Activated CD8-positive, alpha-beta T cell treated with anti-CD3 and anti-CD28 coated beads for 36 hours (primary cell): ENCODE measurements at regions of chr1 and their contacts with region 1.

Region 1: GRCh38 chr1:145720877-145721671 is 1.8 kb downstream of the CD160 start:
- DNase-seq: peak; percentile 78
- ATAC-seq: peak; percentile 79
- H3K4me3 Mint-ChIP-seq: peak overlapping the region; percentile 72
- H3K27ac Mint-ChIP-seq: peak overlapping the region; percentile 78
- H3K4me1 Mint-ChIP-seq: peaks cover 38% of the 10 kb centered on the region
- H3K27me3 Mint-ChIP-seq: peaks cover 12% of the 10 kb centered on the region
- CTCF ChIP-seq: peak; percentile 94

Region 2: GRCh38 chr1:145601593-145601992 is 119.5 kb before region 1 on chr1:
- CTCF ChIA-PET with region 1: interaction called, 10 read pairs
- POLR2A ChIA-PET with region 1: no interaction called
- intact Hi-C with region 1: no loop called
- DNase-seq: no peak
- ATAC-seq: no peak
- H3K4me3 Mint-ChIP-seq: no peak overlapping the region
- H3K27ac Mint-ChIP-seq: no peak overlapping the region
- H3K4me1 Mint-ChIP-seq: no peaks in the 10 kb centered on the region
- H3K27me3 Mint-ChIP-seq: peaks cover 8% of the 10 kb centered on the region
- CTCF ChIP-seq: no peak

Region 3: DNA sequence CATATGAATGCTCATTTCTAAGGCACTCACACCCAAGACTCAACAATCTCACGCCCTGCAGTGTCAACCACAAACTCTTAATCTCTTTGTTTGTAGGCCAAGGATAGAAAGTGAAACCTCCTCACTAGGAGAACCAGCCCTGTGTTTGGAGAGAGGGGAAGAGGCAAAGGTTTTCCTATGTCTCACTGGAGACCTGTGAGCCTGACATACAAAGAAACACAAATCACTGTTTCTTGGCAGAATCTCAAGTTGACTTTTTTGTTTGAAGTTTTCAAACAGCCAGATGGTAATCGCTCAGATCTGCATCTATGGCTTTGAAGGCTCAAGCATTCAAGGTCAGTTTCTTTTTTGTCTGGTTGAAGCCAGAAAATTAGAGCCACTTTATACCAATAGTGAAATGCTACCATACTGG is 30.4 kb before region 1 on chr1:
- CTCF ChIA-PET with region 1: interaction called, 13 read pairs
- POLR2A ChIA-PET with region 1: no interaction called
- intact Hi-C with region 1: no loop called
- DNase-seq: peak; percentile 66
- ATAC-seq: peak; percentile 95
- H3K4me3 Mint-ChIP-seq: no peak overlapping the region
- H3K27ac Mint-ChIP-seq: peak overlapping the region; percentile 68
- H3K4me1 Mint-ChIP-seq: peaks cover 27% of the 10 kb centered on the region
- H3K27me3 Mint-ChIP-seq: no peaks in the 10 kb centered on the region
- CTCF ChIP-seq: no peak

Region 4: GRCh38 chr1:145706086-145706680 is 14.9 kb before region 1 on chr1:
- CTCF ChIA-PET with region 1: interaction called, 15 read pairs
- POLR2A ChIA-PET with region 1: interaction called, 3 read pairs
- intact Hi-C with region 1: no loop called
- DNase-seq: no peak
- ATAC-seq: no peak
- H3K4me3 Mint-ChIP-seq: no peak overlapping the region
- H3K27ac Mint-ChIP-seq: no peak overlapping the region
- H3K4me1 Mint-ChIP-seq: no peaks in the 10 kb centered on the region
- H3K27me3 Mint-ChIP-seq: no peaks in the 10 kb centered on the region
- CTCF ChIP-seq: no peak

Region 5: DNA sequence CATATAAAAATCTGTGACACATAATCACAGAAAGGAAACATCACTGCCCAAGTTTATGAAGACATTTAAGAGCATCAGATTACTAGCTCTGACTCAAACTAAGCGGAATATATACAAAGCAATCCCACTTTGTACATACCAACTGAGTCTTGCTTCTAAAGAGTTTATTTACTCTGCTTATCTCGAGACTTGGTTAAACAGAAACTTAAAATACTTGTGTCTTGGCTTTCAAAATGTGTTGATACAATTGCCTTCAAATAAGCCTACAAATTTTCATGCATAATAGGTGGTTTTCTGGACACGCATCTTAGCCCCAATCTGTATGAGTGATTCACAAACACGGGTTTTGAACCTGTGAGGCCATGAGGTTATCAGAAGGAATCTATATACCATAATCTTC is 19.2 kb after region 1 on chr1:
- CTCF ChIA-PET with region 1: interaction called, 24 read pairs
- POLR2A ChIA-PET with region 1: interaction called, 3 read pairs
- intact Hi-C with region 1: no loop called
- DNase-seq: no peak
- ATAC-seq: no peak
- H3K4me3 Mint-ChIP-seq: no peak overlapping the region
- H3K27ac Mint-ChIP-seq: no peak overlapping the region
- H3K4me1 Mint-ChIP-seq: peaks cover 2% of the 10 kb centered on the region
- H3K27me3 Mint-ChIP-seq: no peaks in the 10 kb centered on the region
- CTCF ChIP-seq: no peak

Region 6: DNA sequence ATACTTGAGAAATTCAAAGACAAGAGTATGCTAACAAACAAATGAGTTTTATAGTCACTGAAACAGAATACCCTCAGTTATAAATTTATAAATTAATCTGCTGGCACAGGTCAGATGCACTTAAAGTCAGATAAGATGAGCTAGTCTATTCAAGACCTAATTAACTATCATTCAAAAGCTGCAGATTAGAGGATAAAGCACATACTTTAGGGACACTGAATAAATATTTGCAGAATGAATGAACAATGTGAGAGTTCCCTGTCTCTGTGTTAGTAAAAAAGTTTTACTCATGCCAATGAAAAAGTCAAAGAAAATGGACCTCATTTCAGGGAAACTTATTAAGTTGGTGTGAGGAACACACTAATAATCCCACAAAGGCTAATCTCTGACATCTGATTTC is 44.5 kb after region 1 on chr1:
- CTCF ChIA-PET with region 1: no interaction called
- POLR2A ChIA-PET with region 1: no interaction called
- intact Hi-C with region 1: no loop called
- DNase-seq: no peak
- ATAC-seq: no peak
- H3K4me3 Mint-ChIP-seq: no peak overlapping the region
- H3K27ac Mint-ChIP-seq: no peak overlapping the region
- H3K4me1 Mint-ChIP-seq: peaks cover 3% of the 10 kb centered on the region
- H3K27me3 Mint-ChIP-seq: no peaks in the 10 kb centered on the region
- CTCF ChIP-seq: no peak

Region 7: GRCh38 chr1:145782166-145783099 is 61.4 kb after region 1 on chr1:
- CTCF ChIA-PET with region 1: interaction called, 14 read pairs
- POLR2A ChIA-PET with region 1: no interaction called
- intact Hi-C with region 1: no loop called
- DNase-seq: no peak
- ATAC-seq: no peak
- H3K4me3 Mint-ChIP-seq: no peak overlapping the region
- H3K27ac Mint-ChIP-seq: peak overlapping the region; percentile 17
- H3K4me1 Mint-ChIP-seq: peaks cover 31% of the 10 kb centered on the region
- H3K27me3 Mint-ChIP-seq: no peaks in the 10 kb centered on the region
- CTCF ChIP-seq: no peak

Region 8: GRCh38 chr1:145996433-145997015 is 275.4 kb after region 1 on chr1 and contains the start of gene TXNIP:
- CTCF ChIA-PET with region 1: no interaction called
- POLR2A ChIA-PET with region 1: no interaction called
- intact Hi-C with region 1: no loop called
- DNase-seq: peak; percentile 98
- ATAC-seq: peak; percentile 79
- H3K4me3 Mint-ChIP-seq: peak within 1 kb of the TSS; percentile 98
- H3K27ac Mint-ChIP-seq: peak within 1 kb of the TSS; percentile 100
- H3K4me1 Mint-ChIP-seq: peaks cover 61% of the 10 kb centered on the region
- H3K27me3 Mint-ChIP-seq: no peaks in the 10 kb centered on the region
- CTCF ChIP-seq: no peak
- total RNA-seq, gene TXNIP: 130 to 134 TPM